ENCODE measurements at regions of chr2 and their contacts with region 1.

Region 1: GRCh38 chr2:44087036-44087713 is 81.5 kb upstream of the PPM1B start:
- DNase-seq: peak; percentile 64 to 99
- H3K4me3 ChIP-seq: peak overlapping the region; percentile 7 to 52 (median 25); a peak in 6 of 8 replicates
- H3K27ac ChIP-seq: peak overlapping the region; percentile 48; the same call in 1 of the 2 replicates
- H3K4me1 ChIP-seq: peaks cover 6 to 27% (median 19%) of the 10 kb centered on the region in 4 experiments; a peak in 6 of 7 replicates
- H3K27me3 ChIP-seq: no peaks in the 10 kb centered on the region
- CTCF ChIP-seq: peak; percentile 79 to 92 (median 85)
- EP300 ChIP-seq: peak in 1 of 2 experiments; percentile 63; a peak in 1 of 3 replicates
- POLR2A ChIP-seq: no peak
- RAD21 ChIP-seq: peak; percentile 91 to 97

Region 2: DNA sequence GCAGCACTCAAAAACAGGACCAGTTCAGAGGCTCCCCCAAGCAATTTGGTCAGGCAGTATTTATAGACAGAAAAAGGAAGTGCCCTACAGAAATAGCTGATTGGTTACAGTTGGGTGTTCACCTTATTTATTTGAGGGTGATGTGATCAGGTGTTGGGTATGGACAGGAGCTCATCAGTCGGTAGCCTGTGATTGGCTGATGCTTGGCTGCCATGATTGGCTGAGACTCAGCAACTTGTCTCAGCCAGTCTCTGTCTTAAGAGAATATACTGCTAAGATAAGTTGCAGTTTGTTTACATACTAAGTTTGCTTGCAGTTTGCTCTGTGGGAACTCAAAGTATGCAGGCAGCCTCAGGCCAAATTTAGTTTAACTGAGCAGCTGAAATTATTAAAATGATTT is 239.0 kb before region 1 on chr2:
- CTCF ChIA-PET with region 1: no interaction called
- POLR2A ChIA-PET with region 1: no interaction called
- DNase-seq: peak in 1 of 2 experiments; percentile 24
- H3K4me3 ChIP-seq: no peak overlapping the region
- H3K27ac ChIP-seq: no peak overlapping the region
- H3K4me1 ChIP-seq: no peaks in the 10 kb centered on the region; a peak in 1 of 7 replicates
- H3K27me3 ChIP-seq: no peaks in the 10 kb centered on the region
- CTCF ChIP-seq: no peak
- EP300 ChIP-seq: no peak
- POLR2A ChIP-seq: no peak
- RAD21 ChIP-seq: no peak

Region 3: GRCh38 chr2:44044281-44044720 is 42.9 kb before region 1 on chr2:
- CTCF ChIA-PET with region 1: interaction called, 10 read pairs
- POLR2A ChIA-PET with region 1: interaction called, 3 read pairs
- DNase-seq: peak; percentile 73 to 91
- H3K4me3 ChIP-seq: no peak overlapping the region
- H3K27ac ChIP-seq: no peak overlapping the region
- H3K4me1 ChIP-seq: no peaks in the 10 kb centered on the region
- H3K27me3 ChIP-seq: no peaks in the 10 kb centered on the region
- CTCF ChIP-seq: peak; percentile 95 to 99 (median 98)
- EP300 ChIP-seq: no peak; a peak in 1 of 3 replicates
- POLR2A ChIP-seq: no peak
- RAD21 ChIP-seq: peak; percentile 99

Region 4: DNA sequence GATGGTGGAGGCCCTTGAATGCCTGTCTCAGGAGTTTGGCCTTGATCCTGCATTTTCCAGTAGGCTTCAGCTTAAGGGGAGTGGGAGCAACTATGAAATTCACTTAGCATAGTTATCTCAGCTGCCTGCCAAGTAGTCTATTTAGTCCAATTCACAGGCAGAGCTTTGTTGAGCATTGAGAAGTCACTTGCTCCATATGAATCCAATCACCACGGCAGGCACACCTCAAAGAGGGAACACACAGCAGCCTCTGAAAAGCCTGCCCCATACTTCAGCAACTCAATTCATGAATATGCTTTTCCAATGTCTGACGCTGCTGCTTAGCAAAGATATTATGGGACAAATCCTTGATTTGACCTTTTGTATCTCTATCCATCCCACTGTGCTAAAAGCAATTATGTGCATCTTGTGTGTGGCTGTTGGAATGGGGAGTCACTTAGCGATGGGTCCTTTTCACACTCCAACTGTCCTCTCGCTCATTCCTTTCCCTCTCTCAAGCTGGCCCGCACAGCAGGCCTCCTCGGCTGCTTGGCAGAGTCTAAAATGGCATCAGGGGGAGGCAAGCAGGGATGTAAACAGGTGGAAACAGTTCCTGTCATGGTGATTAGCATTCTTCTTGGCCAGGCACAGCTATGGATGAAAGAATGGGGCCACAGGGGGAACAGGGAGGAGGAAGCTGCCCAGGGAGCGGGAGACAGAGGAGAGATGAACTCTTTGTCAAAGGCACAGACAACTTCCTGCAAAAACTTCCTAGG is 35.4 kb before region 1 on chr2:
- CTCF ChIA-PET with region 1: interaction called, 33 read pairs
- POLR2A ChIA-PET with region 1: no interaction called
- DNase-seq: no peak
- H3K4me3 ChIP-seq: no peak overlapping the region; a peak in 1 of 8 replicates
- H3K27ac ChIP-seq: no peak overlapping the region
- H3K4me1 ChIP-seq: peaks cover 3 to 14% (median 8%) of the 10 kb centered on the region in 4 experiments; a peak in 5 of 7 replicates
- H3K27me3 ChIP-seq: no peaks in the 10 kb centered on the region; a peak in 1 of 7 replicates
- CTCF ChIP-seq: no peak
- EP300 ChIP-seq: peak in 1 of 2 experiments; percentile 41; a peak in 1 of 3 replicates
- POLR2A ChIP-seq: no peak
- RAD21 ChIP-seq: no peak

Region 5: GRCh38 chr2:44167940-44168680 is 80.9 kb after region 1 on chr2:
- CTCF ChIA-PET with region 1: interaction called, 4 read pairs
- POLR2A ChIA-PET with region 1: interaction called, 15 read pairs
- DNase-seq: peak; percentile 90 to 92
- H3K4me3 ChIP-seq: peak overlapping the region; percentile 44 to 80 (median 65)
- H3K27ac ChIP-seq: peak overlapping the region; percentile 83
- H3K4me1 ChIP-seq: peaks cover 0 to 5% (median 3%) of the 10 kb centered on the region in 4 experiments; a peak in 5 of 7 replicates
- H3K27me3 ChIP-seq: no peaks in the 10 kb centered on the region
- CTCF ChIP-seq: no peak
- EP300 ChIP-seq: peak in 1 of 2 experiments; percentile 51; a peak in 1 of 3 replicates
- POLR2A ChIP-seq: peak; percentile 50 to 60; a peak in 2 of 3 replicates
- RAD21 ChIP-seq: no peak

Measured in H1 (cell line).